ENCODE measurements at regions of chr12 and their contacts with region 1.

Region 1: DNA sequence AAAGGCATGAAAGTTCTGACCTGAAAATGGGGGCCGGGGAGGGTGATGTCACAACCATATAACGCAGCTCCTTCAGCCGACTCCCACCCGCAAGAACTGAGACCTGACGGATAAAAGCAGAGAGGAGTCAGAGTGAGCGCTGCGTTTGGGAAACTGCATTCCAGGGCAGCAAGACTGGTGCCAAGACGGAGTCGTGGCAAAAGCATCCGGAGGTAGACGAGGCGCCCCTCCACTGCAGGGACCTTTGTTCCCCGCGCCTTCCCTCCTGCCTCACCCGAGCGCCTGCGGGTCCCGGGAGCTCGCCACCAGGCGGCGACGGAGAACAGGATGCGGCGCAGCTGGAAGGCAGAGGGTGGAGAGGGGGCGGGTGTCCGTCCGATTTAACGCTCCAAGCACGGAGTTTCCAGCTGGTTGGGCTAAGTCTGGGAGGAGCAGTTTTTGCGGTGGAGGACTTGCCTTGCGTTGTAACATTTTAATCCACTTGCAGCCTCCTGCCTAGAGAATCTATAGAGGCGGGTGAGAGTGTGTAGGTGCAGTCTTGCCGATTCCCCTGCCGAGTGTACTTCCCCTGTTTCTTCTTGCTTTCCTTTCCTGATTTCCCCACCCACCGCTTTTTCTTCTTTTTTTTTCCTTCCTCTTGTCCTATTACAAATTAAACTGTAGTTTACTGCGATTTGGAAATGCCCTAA is 1.2 kb upstream of the CPNE8 start:
- DNase-seq: peak; percentile 92
- ATAC-seq: peak; percentile 88

Region 2: DNA sequence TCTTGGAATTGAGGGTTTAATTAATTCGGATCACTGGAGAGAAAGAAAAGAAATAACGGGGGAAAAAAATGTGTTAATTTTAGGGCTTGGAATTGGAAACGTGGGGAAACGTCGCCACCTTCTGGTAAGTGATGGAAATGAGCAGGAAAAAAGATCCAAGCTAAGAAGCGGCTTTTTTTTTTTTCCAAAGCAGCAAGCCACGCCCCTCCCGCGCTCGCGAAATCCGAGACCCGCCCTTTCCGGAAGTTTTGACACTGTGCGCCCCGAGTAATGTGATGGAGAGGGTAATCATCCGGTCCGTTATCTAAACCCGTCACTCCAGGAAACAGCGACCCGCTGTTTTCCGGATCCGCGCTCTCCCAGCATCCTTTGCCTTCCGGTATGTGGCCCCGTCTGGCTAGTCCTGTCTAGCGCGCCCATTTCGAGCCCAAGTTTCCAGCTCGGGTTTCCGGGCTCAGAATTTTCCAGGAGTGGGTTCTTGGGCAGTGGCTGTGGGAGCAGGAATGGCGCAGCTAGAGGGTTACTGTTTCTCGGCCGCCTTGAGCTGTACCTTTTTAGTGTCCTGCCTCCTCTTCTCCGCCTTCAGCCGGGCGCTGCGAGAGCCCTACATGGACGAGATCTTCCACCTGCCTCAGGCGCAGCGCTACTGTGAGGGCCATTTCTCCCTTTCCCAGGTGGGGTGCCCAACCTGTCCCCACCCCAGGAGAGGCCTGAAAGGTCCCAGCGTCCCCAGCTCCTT is 590.1 kb before region 1 on chr12 and contains the start of gene ALG10B:
- intact Hi-C with region 1: loop called (anchors 2 kb)
- DNase-seq: peak; percentile 94
- ATAC-seq: peak; percentile 100
- total RNA-seq, gene ALG10B: 6.7 TPM

Region 3: GRCh38 chr12:38664661-38665269 is 241.9 kb before region 1 on chr12:
- intact Hi-C with region 1: loop called (anchors 5 kb)
- DNase-seq: no peak
- ATAC-seq: no peak

Region 4: GRCh38 chr12:38736821-38737220 is 169.8 kb before region 1 on chr12:
- intact Hi-C with region 1: loop called (anchors 10 kb)
- DNase-seq: no peak
- ATAC-seq: no peak

Region 5: GRCh38 chr12:38831715-38832114 is 74.9 kb before region 1 on chr12:
- intact Hi-C with region 1: loop called (anchors 5 kb)
- DNase-seq: no peak
- ATAC-seq: no peak

Region 6: GRCh38 chr12:39103552-39104165 is 197.0 kb after region 1 on chr12:
- intact Hi-C with region 1: loop called (anchors 5 kb)
- DNase-seq: no peak
- ATAC-seq: peak; percentile 87

Measured in Right ventricle myocardium inferior (tissue), 1 donor.